ENCODE measurements at regions of chr16 and their contacts with region 1.

Region 1: DNA sequence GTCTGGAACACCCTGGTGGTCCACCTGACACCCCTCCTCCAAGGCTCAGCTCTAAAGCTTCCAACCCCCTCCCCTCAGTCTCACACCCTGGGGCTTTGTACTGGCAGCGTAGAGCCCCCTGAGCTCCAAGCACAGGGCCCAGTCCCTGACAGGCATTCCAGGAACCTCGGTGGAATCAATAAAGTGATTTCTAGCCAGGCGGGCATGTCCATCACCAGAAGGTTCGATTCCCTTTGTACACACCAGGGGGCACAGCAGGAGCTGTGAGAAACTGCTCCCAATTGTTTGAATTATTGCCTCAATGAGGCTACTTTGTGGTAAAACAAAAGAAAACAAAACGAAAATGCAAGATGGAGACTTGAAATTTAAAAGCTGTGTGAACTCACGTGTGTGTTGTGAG is 51.8 kb downstream of the SMPD3 start:
- DNase-seq: peak; percentile 69
- H3K4me3 Mint-ChIP-seq: no peak overlapping the region
- H3K27ac Mint-ChIP-seq: peak overlapping the region; percentile 31
- H3K4me1 Mint-ChIP-seq: peaks cover 27% of the 10 kb centered on the region
- H3K27me3 Mint-ChIP-seq: peaks cover 9% of the 10 kb centered on the region

Region 2: GRCh38 chr16:68417711-68418301 is 21.3 kb after region 1 on chr16:
- CTCF ChIA-PET with region 1: interaction called, 12 read pairs
- POLR2A ChIA-PET with region 1: no interaction called
- DNase-seq: peak; percentile 89
- H3K4me3 Mint-ChIP-seq: peak overlapping the region; percentile 74
- H3K27ac Mint-ChIP-seq: peak overlapping the region; percentile 94
- H3K4me1 Mint-ChIP-seq: peaks cover 45% of the 10 kb centered on the region
- H3K27me3 Mint-ChIP-seq: no peaks in the 10 kb centered on the region

Region 3: GRCh38 chr16:68512183-68512582 is 115.7 kb after region 1 on chr16:
- CTCF ChIA-PET with region 1: interaction called, 17 read pairs
- POLR2A ChIA-PET with region 1: no interaction called
- DNase-seq: no peak
- H3K4me3 Mint-ChIP-seq: no peak overlapping the region
- H3K27ac Mint-ChIP-seq: no peak overlapping the region
- H3K4me1 Mint-ChIP-seq: peaks cover 7% of the 10 kb centered on the region
- H3K27me3 Mint-ChIP-seq: peaks cover 16% of the 10 kb centered on the region